ENCODE measurements at regions of chr16 and their contacts with region 1.

Region 1: GRCh38 chr16:89764711-89765201 is 43.4 kb downstream of the ZNF276 start:
- DNase-seq: peak; percentile 60 to 84 (median 67)
- ATAC-seq: peak; percentile 95
- H3K4me3 ChIP-seq: no peak overlapping the region
- H3K4me1 ChIP-seq: no peaks in the 10 kb centered on the region
- CTCF ChIP-seq: no peak

Region 2: GRCh38 chr16:89374393-89374960 is 390.3 kb before region 1 on chr16:
- intact Hi-C with region 1: no loop called
- DNase-seq: no peak
- ATAC-seq: no peak
- H3K4me3 ChIP-seq: no peak overlapping the region
- H3K4me1 ChIP-seq: peaks cover 10% of the 10 kb centered on the region
- CTCF ChIP-seq: no peak

Region 3: DNA sequence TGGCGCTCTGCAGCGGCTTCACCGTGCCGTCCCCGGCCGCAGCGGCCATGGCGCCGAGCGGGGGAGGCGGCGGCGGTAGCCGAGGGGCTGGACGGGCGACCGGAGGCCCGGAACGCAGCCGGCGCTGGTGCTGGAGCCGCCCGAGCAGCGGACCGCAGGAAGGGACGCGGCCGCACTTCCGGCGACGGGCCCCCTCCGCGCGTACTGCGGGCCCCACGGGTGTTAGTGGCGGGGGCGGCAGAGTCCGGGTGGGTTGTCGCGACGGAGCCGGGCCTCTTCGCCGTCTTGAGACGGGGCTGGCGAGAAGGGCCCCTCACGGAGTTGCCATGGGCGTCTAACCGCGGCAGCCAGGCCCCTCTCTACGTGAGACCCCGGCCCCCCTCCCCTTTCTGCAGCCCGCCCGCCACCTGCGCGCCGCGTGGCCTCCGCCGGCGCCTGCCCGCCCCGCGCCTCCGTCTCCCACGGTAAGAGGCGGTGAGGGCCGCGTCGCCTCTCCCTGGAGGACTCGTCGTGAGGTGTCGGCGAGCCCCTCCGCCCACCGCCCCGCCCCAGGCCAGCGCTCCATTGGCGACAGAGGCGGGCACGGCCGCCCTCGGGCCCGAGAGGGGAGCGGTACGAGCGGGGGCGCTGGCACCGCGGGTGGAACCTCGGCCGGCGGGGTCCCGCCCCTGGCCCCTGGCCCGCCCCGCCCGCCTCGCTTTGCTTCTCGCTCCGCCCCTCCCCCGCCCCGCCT is 43.8 kb before region 1 on chr16 and contains the starts of genes VPS9D1 and ZNF276:
- intact Hi-C with region 1: loop called in 1 of 2 experiments (anchors 5 kb)
- DNase-seq: peak; percentile 91 to 92 (median 91)
- ATAC-seq: peak; percentile 74
- H3K4me3 ChIP-seq: peak within 1 kb of the TSS; percentile 60
- H3K4me1 ChIP-seq: peaks cover 32% of the 10 kb centered on the region
- CTCF ChIP-seq: no peak
- total RNA-seq, gene VPS9D1: 15.3 to 20.6 (median 16.4) TPM
- total RNA-seq, gene ZNF276: 30.5 to 50.4 (median 31.6) TPM

Measured in mucosa of descending colon (tissue), 3 donors.